Mammary epithelial cell (primary cell): ENCODE measurements at regions of chr18 and their contacts with region 1.

Region 1: DNA sequence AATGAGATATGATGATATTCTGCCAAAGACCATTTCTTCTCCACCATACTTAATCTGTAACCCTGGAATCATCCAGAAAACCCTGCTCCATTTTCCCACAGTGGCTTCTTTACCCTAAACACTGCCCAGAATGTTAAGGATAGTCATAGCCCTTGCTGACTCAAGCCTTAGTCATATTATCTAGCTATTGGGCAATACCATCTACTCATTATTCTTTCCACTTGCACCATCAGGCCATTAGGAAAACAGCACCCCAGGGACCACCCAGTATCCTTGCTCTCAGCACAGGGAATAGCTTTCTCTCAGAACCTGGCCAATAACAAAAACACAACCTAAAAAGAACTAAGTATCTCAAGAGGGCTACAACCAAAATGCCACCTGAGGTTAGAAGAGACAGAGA is 445.7 kb upstream of the SLC14A2 start:
- DNase-seq: peak; percentile 87
- H3K4me3 ChIP-seq: no peak overlapping the region
- H3K27ac ChIP-seq: peak overlapping the region; percentile 96
- H3K4me1 ChIP-seq: peaks cover 49% of the 10 kb centered on the region
- H3K27me3 ChIP-seq: no peaks in the 10 kb centered on the region
- CTCF ChIP-seq: peak; percentile 19 to 28

Region 2: GRCh38 chr18:44996261-44996660 is 173.3 kb before region 1 on chr18:
- CTCF ChIA-PET with region 1: no interaction called
- dilution Hi-C with region 1: no loop called
- in situ Hi-C with region 1: no loop called
- intact Hi-C with region 1: loop called (anchors 1 kb)
- DNase-seq: no peak
- H3K4me3 ChIP-seq: no peak overlapping the region
- H3K27ac ChIP-seq: no peak overlapping the region
- H3K4me1 ChIP-seq: no peaks in the 10 kb centered on the region
- H3K27me3 ChIP-seq: no peaks in the 10 kb centered on the region
- CTCF ChIP-seq: no peak